ENCODE measurements at regions of chr20 and their contacts with region 1.

Region 1: DNA sequence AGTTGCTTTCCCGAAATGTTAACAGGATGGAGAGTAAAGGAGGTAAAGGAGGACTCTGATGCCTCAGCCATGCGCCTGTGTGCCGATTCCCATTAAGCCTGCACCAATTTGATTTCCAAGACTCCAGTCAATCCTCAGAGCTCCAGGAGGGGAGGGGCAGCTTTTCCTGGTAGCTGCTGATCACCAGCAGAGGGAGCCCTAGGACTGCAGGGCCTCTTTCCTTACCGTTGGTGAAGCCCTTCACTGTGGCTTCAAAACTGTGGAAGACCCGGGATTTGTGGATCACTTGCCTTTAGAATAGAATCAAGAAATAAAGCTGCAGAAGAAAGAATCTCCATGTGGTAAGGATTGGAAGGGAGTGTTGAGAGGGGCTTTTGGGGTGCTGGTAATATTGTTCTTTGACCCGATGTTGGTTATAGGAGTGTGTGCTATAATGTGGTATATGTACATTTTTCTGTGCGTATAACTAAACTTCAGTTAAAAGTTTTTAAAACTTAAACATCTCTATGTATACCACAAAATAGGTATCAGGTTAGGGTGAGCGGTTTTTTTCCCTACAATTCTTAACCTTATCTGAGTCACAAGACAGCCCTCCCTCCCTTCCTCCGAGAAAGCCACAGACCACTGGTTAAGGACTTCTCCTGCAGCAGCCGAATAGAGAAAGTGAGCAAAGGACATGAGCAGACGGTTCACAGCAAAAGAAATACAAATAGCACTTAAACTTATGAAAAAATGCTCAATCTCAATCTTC is 6.9 kb upstream of the OSER1 start:
- DNase-seq: peak; percentile 37 to 87 (median 72)
- ATAC-seq: peak; percentile 61
- H3K4me3 ChIP-seq: peak overlapping the region; percentile 36 to 47
- H3K4me3 Mint-ChIP-seq: peak overlapping the region; percentile 82
- H3K27ac ChIP-seq: peak overlapping the region; percentile 46 to 63
- H3K27ac Mint-ChIP-seq: peak overlapping the region; percentile 96
- H3K4me1 ChIP-seq: peaks cover 48% of the 10 kb centered on the region
- H3K4me1 Mint-ChIP-seq: peaks cover 70% of the 10 kb centered on the region
- H3K27me3 ChIP-seq: no peaks in the 10 kb centered on the region
- H3K27me3 Mint-ChIP-seq: no peaks in the 10 kb centered on the region
- CTCF ChIP-seq: peak; percentile 94

Region 2: DNA sequence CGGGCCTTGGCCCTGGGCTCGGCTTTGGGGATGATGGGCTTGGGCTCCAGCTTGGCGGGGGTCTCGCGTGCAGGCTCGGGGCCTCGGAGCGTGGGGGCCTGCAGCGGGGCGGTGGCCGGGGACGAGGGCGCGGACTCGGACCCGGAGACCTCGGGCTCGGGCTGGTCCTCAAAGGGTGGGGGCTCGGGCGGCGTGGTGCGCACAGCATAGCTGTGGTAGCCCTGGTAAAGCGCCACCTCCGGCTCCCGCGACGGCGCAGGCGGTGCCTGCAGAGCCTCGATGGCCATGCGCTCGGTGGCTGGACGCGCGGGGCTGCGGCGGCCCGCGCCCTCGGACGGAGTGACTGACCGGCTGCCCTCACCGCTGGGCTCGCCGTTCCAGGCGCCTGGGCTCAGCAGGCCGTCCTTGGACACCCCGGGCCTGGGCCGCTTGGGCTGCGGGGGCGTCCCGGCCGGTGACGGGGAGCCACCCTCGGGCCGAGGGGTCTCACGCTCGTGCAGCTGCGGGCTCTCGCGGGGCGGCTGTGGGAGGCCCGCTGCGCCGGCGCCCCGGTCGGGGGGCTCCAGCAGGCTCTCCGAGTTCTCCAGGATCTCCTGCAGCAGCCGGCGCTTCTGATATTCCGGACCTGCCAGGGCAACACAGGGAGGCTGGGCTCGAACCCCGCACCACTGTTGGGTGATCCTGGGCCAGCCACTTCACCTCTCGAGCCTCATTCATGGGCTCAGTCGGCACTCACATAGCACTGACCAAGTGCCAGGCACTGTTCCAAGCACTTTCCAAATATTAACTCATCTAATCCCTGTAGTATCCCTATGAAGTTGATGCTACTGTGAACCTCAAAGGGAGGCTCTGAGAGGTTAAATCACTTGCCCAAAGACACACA is 101.5 kb before region 1 on chr20:
- CTCF ChIA-PET with region 1: interaction called, 10 read pairs
- POLR2A ChIA-PET with region 1: no interaction called
- intact Hi-C with region 1: no loop called
- DNase-seq: no peak
- ATAC-seq: no peak
- H3K4me3 ChIP-seq: no peak overlapping the region
- H3K4me3 Mint-ChIP-seq: no peak overlapping the region
- H3K27ac ChIP-seq: no peak overlapping the region
- H3K27ac Mint-ChIP-seq: no peak overlapping the region
- H3K4me1 ChIP-seq: peaks cover 3% of the 10 kb centered on the region
- H3K4me1 Mint-ChIP-seq: peaks cover 5% of the 10 kb centered on the region
- H3K27me3 ChIP-seq: peaks cover 0 to 6% of the 10 kb centered on the region in 2 experiments
- H3K27me3 Mint-ChIP-seq: peaks cover 42% of the 10 kb centered on the region
- CTCF ChIP-seq: no peak

Region 3: DNA sequence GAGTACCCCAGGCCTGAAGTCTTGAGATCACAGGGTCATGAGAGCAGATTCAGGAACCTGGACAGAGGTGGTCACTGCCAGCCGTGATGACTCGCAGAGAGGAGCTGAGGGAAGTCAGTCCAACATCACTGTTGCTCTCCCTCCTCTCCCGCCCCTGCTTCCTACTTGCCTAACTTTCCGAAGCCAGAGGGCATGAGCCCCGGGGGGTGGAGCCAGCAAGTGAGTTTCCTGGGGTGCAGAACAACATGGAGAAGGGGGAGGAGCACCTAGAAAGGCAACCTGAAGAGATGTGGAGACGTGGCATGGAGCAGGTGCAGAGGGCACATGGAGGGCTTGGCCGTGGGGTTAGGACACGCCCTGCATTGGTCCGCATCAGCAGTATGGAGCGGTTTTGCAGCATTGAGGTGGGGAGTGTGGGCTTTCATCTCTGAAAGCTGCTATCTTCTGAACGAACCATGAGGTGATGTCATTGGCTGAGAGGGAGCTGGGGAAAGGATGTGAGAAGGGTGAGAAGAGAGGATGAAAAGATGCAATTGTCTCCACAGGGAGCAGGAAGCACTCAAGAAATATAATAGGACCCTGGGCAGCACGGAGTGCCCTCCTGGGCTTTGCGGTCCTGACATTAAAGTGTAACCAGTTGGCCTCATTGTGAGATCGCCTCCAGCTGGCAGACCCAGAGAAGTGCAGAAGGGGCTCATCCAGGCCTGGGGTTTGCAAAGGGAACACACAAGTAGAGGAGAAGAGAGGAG is 54.6 kb after region 1 on chr20:
- CTCF ChIA-PET with region 1: interaction called, 10 read pairs
- POLR2A ChIA-PET with region 1: interaction called, 4 read pairs
- intact Hi-C with region 1: loop called (anchors 1 to 2 kb)
- DNase-seq: peak in 3 of 9 experiments; percentile 14 to 30 (median 20)
- ATAC-seq: no peak
- H3K4me3 ChIP-seq: no peak overlapping the region
- H3K4me3 Mint-ChIP-seq: no peak overlapping the region
- H3K27ac ChIP-seq: no peak overlapping the region
- H3K27ac Mint-ChIP-seq: no peak overlapping the region
- H3K4me1 ChIP-seq: no peaks in the 10 kb centered on the region
- H3K4me1 Mint-ChIP-seq: no peaks in the 10 kb centered on the region
- H3K27me3 ChIP-seq: no peaks in the 10 kb centered on the region
- H3K27me3 Mint-ChIP-seq: no peaks in the 10 kb centered on the region
- CTCF ChIP-seq: no peak

Region 4: DNA sequence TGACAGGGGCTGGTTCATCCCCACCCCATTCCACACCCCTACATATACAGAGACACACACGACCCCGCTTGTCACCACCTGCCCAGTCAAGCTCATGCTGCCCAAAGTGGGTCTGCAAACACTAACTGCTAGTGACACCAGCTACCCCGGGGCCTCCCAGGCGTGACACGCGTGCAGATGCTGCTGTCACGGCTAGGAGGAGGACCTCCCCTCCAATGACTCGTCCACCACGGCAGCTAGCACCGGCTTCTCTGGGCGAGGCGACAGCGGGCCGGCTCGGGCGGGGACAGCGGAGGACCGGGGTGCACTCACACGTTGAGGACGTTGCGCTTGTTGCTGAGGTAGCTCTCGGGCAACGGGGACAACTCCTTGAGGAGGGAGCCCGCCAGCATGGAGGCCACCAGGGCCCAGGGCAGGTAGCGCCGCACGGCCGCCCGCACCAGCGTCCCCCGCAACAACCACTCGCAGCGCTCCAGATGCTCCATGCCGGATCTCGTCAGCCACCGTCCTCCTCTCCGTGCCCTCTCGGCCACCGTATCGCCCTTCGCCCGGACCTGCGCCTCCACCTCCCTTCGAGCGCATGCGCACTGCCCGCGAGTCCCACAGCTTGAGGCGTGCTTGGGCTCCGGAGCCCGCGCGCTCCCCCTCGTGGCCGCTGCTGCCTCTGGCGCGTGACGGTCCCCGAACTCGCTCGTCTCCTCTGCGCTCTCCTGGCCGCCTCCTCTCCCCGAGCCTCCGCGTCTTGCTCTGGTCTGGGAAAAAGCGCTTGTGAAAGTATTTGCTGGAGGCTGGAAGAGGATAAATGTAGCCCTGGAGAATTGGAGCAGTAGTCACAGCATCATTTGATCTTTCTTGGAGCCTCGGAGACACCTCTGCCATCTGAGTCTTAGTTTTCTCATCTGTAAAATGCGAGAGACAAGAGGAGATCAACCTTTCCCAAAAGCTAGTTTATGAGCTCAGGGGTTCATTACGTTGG is 93.4 kb after region 1 on chr20 and contains the start of gene FITM2:
- CTCF ChIA-PET with region 1: interaction called, 596 read pairs
- POLR2A ChIA-PET with region 1: interaction called, 58 read pairs
- intact Hi-C with region 1: loop called (anchors 1 kb)
- DNase-seq: peak; percentile 96 to 99 (median 99)
- ATAC-seq: peak; percentile 95
- H3K4me3 ChIP-seq: peak within 1 kb of the TSS; percentile 73 to 89
- H3K4me3 Mint-ChIP-seq: peak within 1 kb of the TSS; percentile 96
- H3K27ac ChIP-seq: peak within 1 kb of the TSS; percentile 38 to 56
- H3K27ac Mint-ChIP-seq: peak within 1 kb of the TSS; percentile 89
- H3K4me1 ChIP-seq: peaks cover 17% of the 10 kb centered on the region
- H3K4me1 Mint-ChIP-seq: peaks cover 33% of the 10 kb centered on the region
- H3K27me3 ChIP-seq: no peaks in the 10 kb centered on the region
- H3K27me3 Mint-ChIP-seq: no peaks in the 10 kb centered on the region
- CTCF ChIP-seq: peak; percentile 87
- total RNA-seq, gene FITM2: 3.3 to 3.4 TPM

Region 5: DNA sequence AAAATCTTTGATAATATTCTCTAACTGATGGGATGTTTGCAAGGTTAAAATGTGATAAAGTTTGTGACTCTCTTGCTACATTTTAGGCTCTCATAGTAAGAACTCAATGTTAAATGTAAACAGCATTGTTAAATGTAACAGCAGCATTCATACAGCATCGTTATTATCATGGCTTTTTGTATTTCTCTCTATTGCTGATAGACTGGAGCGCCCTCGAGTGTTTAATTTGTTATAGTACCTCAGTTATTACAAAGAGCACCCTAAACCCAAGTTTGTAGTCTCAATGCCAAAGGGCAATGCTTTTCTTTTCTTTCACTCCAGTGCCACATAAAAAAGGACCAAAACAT is 243.3 kb after region 1 on chr20:
- CTCF ChIA-PET with region 1: interaction called, 11 read pairs
- POLR2A ChIA-PET with region 1: no interaction called
- intact Hi-C with region 1: loop called (anchors 1 kb)
- DNase-seq: peak in 2 of 9 experiments; percentile 24 to 36
- ATAC-seq: no peak
- H3K4me3 ChIP-seq: no peak overlapping the region
- H3K4me3 Mint-ChIP-seq: no peak overlapping the region
- H3K27ac ChIP-seq: no peak overlapping the region
- H3K27ac Mint-ChIP-seq: no peak overlapping the region
- H3K4me1 ChIP-seq: no peaks in the 10 kb centered on the region
- H3K4me1 Mint-ChIP-seq: no peaks in the 10 kb centered on the region
- H3K27me3 ChIP-seq: no peaks in the 10 kb centered on the region
- H3K27me3 Mint-ChIP-seq: no peaks in the 10 kb centered on the region
- CTCF ChIP-seq: peak; percentile 41

Region 6: DNA sequence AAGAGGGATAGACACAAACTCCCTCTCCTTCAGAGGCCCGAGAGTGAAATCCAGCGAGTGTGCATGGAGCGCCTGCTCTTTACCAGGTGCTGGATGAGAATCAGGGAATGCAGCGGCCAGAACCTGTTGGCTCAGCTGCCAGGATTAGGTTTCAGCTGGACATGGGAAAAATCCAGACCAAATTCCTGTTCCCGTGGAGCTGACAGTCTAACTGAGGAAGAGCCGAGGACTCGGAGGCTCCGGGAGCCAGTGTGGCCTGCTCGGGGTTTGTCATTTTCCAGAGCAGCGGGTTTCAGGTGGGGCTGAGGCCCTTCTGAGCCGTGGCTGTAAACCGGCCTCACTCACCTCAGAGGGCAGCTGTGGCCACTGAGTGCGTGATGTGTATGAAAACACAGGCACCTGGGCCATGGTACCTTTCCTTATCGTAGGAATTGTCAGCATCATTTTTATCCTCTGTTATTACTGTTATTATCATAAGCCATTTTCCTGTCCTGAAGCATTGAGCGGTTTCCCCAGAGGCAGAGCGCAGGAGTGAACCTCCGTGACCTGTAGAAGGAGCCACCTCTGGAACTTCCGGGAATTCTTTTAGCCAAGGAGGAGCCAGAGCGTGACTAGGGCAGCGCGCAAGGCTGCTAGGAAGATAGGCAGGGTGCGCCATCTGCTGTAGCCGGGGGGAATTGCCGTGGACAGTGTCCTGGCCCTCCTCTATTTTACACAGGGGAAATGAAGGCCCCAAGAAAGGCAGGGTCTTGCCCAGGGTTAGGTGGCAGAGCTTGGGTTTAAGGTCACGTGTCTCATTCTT is 392.2 kb after region 1 on chr20:
- CTCF ChIA-PET with region 1: interaction called, 52 read pairs
- POLR2A ChIA-PET with region 1: interaction called, 9 read pairs
- intact Hi-C with region 1: loop called (anchors 1 kb)
- DNase-seq: peak; percentile 71 to 93 (median 87)
- ATAC-seq: peak; percentile 80
- H3K4me3 ChIP-seq: peak overlapping the region in 1 of 2 experiments; percentile 5
- H3K4me3 Mint-ChIP-seq: peak overlapping the region; percentile 53
- H3K27ac ChIP-seq: peak overlapping the region; percentile 69 to 83
- H3K27ac Mint-ChIP-seq: peak overlapping the region; percentile 98
- H3K4me1 ChIP-seq: peaks cover 48% of the 10 kb centered on the region
- H3K4me1 Mint-ChIP-seq: peaks cover 39% of the 10 kb centered on the region
- H3K27me3 ChIP-seq: no peaks in the 10 kb centered on the region
- H3K27me3 Mint-ChIP-seq: no peaks in the 10 kb centered on the region
- CTCF ChIP-seq: peak; percentile 92

Region 7: DNA sequence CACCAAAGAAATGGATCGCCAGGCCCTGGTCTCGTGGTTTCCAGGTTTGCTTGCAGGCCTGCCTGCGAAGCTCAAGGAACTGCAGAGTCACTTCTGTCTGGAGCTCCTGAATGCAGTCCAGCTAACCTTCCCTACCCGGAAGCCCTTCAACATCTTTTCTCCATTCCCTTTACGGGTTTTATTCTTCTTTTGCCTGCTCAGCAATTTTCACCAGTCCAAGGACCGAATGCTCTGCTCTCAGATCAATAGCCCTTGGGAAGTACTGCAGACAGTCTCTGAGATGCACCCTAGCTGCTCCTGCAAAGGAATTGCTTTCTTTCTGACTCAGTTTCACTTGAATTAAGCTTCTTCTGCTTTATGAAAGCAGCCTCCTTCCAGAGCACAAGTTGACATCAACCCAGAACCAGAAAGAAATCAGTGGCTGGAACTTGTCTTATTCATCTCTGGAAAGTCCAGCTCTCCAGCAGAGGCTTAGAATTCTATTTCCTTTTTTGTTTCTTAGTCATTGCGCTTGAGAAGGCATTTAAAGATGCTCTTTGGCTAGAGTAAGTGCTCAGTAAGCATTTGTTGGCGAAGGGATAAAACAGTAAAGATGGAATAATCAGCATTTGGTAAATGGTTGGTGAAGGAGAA is 649.3 kb after region 1 on chr20:
- CTCF ChIA-PET with region 1: interaction called, 3 read pairs
- POLR2A ChIA-PET with region 1: interaction called, 3 read pairs
- intact Hi-C with region 1: loop called (anchors 2 to 5 kb)
- DNase-seq: no peak
- ATAC-seq: no peak
- H3K4me3 ChIP-seq: no peak overlapping the region
- H3K4me3 Mint-ChIP-seq: peak overlapping the region; percentile 65
- H3K27ac ChIP-seq: no peak overlapping the region
- H3K27ac Mint-ChIP-seq: no peak overlapping the region
- H3K4me1 ChIP-seq: peaks cover 7% of the 10 kb centered on the region
- H3K4me1 Mint-ChIP-seq: peaks cover 15% of the 10 kb centered on the region
- H3K27me3 ChIP-seq: no peaks in the 10 kb centered on the region
- H3K27me3 Mint-ChIP-seq: peaks cover 6% of the 10 kb centered on the region
- CTCF ChIP-seq: no peak